ENCODE measurements at regions of chr11 and their contacts with region 1.

Region 1: DNA sequence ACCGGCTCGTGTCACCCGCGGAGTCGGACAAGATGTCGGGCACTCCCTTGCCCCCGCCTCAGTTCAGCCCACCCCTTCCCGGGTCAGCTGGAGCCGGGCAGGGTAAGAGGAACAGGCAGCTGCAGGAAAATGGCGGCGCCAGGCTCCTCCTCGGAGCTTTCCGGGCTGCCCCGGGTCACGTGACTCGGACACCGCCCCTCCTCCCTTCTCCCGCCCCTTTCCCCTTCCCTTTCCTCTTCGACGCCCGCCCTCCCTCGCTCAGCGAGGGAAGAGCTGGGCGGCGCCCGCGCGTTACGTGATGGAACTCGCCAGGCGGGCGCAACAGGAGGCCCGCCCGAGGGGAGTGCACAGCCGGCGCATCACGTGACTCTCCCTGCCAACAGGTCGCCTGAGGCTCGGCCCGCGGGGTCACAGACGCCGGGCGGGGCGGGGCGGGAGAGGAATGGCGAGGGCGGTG is at the start of gene PICALM:
- DNase-seq: peak; percentile 95
- ATAC-seq: peak; percentile 92
- H3K4me3 Mint-ChIP-seq: peak within 1 kb of the TSS; percentile 99
- H3K27ac Mint-ChIP-seq: peak within 1 kb of the TSS; percentile 94
- H3K4me1 Mint-ChIP-seq: peaks cover 23% of the 10 kb centered on the region
- H3K27me3 Mint-ChIP-seq: peaks cover 7% of the 10 kb centered on the region
- total RNA-seq, gene PICALM: 103 to 115 TPM

Region 2: DNA sequence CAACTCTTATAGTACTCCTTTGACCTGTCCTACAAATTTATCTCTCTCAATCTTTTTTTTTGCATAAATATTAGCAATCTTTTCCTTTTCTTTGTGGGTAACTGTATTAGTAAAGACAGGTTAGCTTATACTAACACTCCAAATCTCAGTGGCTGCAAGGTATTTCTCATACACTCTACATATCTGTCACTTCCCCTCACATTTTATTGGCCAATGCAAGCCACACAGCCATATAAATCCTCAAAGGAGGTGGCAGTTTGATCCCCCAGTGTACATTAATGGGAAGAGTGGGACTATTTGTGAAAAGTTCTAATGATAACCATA is 133.0 kb after region 1 on chr11:
- POLR2A ChIA-PET with region 1: interaction called, 12 read pairs
- DNase-seq: no peak
- ATAC-seq: peak; percentile 76
- H3K4me3 Mint-ChIP-seq: no peak overlapping the region
- H3K27ac Mint-ChIP-seq: no peak overlapping the region
- H3K4me1 Mint-ChIP-seq: no peaks in the 10 kb centered on the region
- H3K27me3 Mint-ChIP-seq: no peaks in the 10 kb centered on the region